ENCODE measurements at regions of chr3 and their contacts with region 1.

Region 1: DNA sequence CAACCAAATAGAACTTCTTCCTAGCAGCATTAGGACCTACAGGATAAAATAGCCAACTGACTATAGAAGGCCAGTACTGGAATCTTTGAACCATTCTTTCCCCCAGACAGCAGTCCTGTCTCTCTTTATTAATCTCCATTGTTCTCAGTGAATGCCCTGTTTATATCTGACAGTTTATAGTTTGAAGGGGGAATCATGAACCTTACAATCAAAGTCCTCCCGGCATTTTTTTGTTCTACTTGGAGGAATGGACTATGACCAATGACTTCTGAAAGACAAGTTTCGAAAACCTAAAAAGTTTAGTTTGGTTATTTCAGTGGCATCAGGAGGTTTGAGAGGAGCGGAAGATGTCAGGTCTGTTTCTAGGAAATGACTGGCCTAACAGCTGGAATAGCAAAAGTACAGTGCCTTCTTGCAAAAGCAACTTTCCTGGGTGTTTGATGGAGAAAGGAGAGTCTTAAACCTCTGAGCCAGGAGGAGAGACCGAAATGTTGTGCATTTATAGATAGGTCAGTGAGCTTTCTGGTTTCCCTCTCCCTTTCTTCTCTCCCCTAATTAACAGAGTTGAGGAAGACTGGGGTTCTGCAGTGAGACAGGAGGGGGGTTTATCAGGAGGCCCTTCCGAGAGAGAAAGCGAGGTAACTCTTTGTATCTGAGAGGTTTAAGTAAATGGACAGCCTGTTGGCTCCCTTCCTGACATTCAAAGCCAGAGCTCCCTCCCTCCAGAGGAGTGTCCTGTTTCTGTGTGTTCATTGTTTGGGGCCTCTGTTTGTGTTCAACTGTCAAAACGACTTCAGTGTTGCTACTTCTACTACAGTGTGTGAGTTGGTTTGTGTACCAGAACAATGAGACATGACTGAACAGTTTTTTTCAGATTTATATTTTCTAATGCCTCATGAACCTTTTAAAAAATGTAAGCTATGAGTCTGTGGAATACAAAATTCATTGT is 383.0 kb upstream of the RARB start:
- DNase-seq: peak in 3 of 5 donors; percentile 30 to 39 (median 31)
- ATAC-seq: peak; percentile 86 to 91 (median 88)
- H3K4me3 ChIP-seq: no peak overlapping the region
- H3K27ac ChIP-seq: peak overlapping the region in 10 of 12 donors; percentile 6 to 59 (median 21)
- H3K4me1 ChIP-seq: peaks cover 0 to 57% (median 22%) of the 10 kb centered on the region in 12 donors
- H3K27me3 ChIP-seq: no peaks in the 10 kb centered on the region
- CTCF ChIP-seq: no peak
- POLR2A ChIP-seq: no peak

Region 2: GRCh38 chr3:25033407-25034029 is 11.5 kb before region 1 on chr3:
- intact Hi-C with region 1: no loop called
- DNase-seq: peak in 4 of 5 donors; percentile 54 to 77 (median 62)
- ATAC-seq: peak; percentile 74 to 86 (median 82)
- H3K4me3 ChIP-seq: no peak overlapping the region
- H3K27ac ChIP-seq: no peak overlapping the region
- H3K4me1 ChIP-seq: peaks cover 0 to 20% (median 11%) of the 10 kb centered on the region in 12 donors
- H3K27me3 ChIP-seq: no peaks in the 10 kb centered on the region
- CTCF ChIP-seq: peak; percentile 55 to 74 (median 60)
- POLR2A ChIP-seq: no peak

Region 3: GRCh38 chr3:25107918-25108629 is 63.0 kb after region 1 on chr3:
- intact Hi-C with region 1: no loop called
- DNase-seq: no peak
- ATAC-seq: no peak
- H3K4me3 ChIP-seq: no peak overlapping the region
- H3K27ac ChIP-seq: no peak overlapping the region
- H3K4me1 ChIP-seq: no peaks in the 10 kb centered on the region
- H3K27me3 ChIP-seq: no peaks in the 10 kb centered on the region
- CTCF ChIP-seq: no peak
- POLR2A ChIP-seq: no peak

Region 4: GRCh38 chr3:25151281-25151902 is 106.4 kb after region 1 on chr3:
- intact Hi-C with region 1: loop called in 3 of 10 experiments (anchors 5 to 10 kb)
- DNase-seq: no peak
- ATAC-seq: peak in 3 of 4 donors; percentile 57 to 76 (median 62)
- H3K4me3 ChIP-seq: peak overlapping the region in 8 of 12 donors; percentile 14 to 31 (median 23)
- H3K27ac ChIP-seq: peak overlapping the region; percentile 31 to 82 (median 62)
- H3K4me1 ChIP-seq: peaks cover 0 to 19% (median 3%) of the 10 kb centered on the region in 12 donors
- H3K27me3 ChIP-seq: no peaks in the 10 kb centered on the region
- CTCF ChIP-seq: no peak
- POLR2A ChIP-seq: no peak

Region 5: DNA sequence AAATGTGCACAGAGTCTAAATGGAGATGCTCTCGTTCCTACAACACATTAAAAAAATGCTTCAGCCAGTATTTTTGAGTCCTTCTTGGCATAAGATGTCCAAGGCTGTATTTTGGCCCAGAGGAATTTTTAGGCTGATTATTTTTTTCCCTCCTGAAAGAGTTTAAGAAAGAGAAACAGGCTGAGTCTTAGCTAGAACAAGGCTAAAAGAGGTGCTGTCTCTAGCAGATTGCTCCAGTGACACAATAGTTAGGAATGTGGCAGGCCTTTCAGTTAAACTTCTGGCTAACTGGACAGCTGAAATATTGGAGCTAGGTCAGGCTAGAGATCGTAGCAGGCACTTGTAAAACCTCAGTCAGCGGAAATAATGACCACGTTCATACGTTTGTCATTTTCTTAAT is 111.6 kb after region 1 on chr3:
- intact Hi-C with region 1: loop called in 3 of 10 experiments (anchors 5 to 10 kb)
- DNase-seq: no peak
- ATAC-seq: peak; percentile 86 to 99 (median 91)
- H3K4me3 ChIP-seq: peak overlapping the region in 1 of 12 donors; percentile 24
- H3K27ac ChIP-seq: peak overlapping the region in 3 of 12 donors; percentile 27 to 42 (median 40)
- H3K4me1 ChIP-seq: peaks cover 0 to 14% (median 0%) of the 10 kb centered on the region in 12 donors
- H3K27me3 ChIP-seq: no peaks in the 10 kb centered on the region
- CTCF ChIP-seq: no peak
- POLR2A ChIP-seq: no peak

Measured in heart left ventricle (tissue), 16 donors.